ENCODE measurements at regions of chr15 and their contacts with region 1.

Region 1: GRCh38 chr15:76336254-76337058 is at the start of gene ISL2:
- DNase-seq: peak; percentile 90

Region 2: DNA sequence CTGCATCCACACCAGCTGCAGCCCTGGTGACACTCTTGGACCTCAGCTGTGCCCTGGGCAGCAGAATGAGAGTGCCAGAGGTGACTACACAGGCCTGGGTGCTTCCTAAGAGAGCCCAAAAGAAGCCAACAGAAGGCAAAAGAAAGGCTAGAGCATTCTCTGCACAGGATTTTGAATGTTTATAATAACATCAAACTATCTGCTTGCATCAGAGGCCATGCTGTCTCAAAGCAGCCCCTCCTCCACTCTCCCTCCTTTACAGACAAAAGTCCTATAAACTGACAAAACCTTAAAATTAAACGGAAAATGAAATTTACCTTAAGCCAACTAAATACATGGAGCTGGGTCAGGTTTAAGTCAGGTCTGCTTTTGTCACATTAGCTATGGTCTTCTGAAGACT is 120.8 kb before region 1 on chr15:
- CTCF ChIA-PET with region 1: no interaction called
- POLR2A ChIA-PET with region 1: interaction called, 11 read pairs
- DNase-seq: no peak

Region 3: DNA sequence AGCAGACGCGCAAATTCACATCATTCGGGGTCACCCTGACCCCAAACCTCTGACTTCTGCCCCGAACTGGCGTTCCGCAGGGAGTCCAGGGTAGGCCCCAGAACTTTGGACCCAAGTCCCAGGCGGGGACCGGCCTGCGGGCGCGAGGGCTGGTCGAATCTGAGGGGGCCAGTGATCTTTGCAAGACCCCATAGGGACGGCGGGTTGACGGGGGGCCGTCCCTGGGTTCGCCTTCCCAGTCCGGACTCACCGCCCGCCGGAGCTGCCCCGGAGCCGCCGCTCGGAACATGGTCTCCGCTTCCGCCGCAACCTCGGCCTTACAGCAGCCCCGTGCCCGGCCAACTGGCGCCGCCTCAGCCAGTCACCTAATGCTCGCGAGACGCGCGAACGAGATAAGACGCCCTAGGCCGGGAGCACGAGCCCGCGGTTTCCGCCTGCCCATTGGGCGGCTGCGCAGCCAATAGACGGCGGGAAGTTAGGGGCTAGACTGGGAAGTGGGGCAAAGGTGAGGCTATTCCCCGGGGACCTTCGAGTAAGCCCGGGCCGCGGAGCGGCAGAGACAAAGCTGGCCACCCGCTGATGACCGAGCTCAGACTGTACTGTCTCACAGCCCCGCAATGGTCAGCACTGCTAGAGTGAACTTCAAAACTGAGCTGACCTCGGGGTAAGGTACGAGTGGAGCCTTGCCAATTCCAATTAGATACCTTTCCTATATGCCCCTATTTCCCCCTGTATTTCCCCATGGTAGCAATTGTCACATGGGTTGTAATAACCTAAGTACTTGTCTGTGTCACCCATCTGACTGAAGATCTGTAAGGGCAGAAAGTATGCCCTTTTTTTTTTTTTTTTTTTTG is 25.1 kb before region 1 on chr15 and contains the start of gene ETFA:
- CTCF ChIA-PET with region 1: no interaction called
- POLR2A ChIA-PET with region 1: interaction called, 20 read pairs
- DNase-seq: peak; percentile 100

Region 4: DNA sequence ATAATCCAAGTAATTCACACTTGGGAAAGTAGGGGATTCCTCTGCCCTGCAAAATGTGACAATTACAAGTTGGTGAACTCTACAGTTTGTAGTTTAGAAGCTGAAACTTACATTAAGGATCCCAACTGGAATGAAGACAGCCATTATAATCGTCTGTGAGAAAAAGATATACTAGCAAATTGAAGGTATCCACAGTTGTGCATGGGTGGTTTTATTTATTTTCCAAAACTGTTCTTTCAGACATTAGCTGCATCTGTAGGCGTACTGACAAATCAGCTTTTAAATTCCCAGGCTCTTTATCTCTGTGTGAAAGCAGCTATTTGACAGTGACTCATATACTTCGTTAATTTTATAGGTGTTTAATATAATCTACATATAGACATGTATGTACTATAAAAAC is 12.4 kb before region 1 on chr15:
- CTCF ChIA-PET with region 1: interaction called, 3 read pairs
- POLR2A ChIA-PET with region 1: interaction called, 13 read pairs
- DNase-seq: no peak

Measured in HEK293T (cell line).